ENCODE measurements at regions of chr2 and their contacts with region 1.

Region 1: DNA sequence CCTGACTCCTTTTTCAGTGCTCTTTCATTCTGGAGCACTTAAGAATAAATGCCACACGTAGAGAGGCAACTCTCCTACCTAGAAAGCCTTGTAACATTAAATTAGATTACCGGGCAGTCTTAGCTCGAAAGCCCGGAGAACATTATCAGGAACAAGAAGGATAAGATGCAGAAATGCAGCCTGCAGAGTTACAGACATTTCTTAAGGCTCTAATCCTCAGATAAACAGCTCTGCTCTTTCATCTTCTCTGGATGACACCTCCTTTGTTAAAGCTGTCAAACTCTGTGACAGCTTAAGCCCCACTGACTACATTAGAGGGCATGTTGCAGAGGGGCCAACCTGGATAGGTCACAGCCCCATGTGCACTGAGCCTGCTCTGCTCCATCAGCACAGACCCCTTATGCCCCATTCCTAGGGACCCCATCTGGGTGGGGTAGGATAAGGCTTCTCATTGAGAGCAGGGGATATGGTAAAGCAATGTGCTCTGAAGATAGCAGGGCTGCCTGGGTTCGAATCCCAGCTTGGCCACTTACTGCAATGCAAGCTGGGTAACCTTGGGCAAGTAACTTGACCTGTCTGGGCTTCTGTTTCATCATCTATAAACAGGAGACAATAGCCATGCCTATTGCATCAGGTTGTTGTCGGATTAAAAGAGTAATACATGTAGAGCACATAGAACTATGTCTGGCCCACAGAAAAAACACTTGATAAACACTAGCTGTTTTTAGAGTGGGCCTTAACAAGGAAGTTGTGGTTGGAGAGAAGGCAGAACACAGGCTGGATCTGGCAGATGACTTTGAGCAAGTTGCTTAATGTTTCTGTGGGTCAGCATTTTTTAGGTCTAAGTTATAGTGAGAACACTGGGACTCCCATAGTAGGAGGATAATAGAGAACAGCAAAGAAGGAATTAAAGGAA is 111.4 kb downstream of the THNSL2 start:
- DNase-seq: no peak

Region 2: DNA sequence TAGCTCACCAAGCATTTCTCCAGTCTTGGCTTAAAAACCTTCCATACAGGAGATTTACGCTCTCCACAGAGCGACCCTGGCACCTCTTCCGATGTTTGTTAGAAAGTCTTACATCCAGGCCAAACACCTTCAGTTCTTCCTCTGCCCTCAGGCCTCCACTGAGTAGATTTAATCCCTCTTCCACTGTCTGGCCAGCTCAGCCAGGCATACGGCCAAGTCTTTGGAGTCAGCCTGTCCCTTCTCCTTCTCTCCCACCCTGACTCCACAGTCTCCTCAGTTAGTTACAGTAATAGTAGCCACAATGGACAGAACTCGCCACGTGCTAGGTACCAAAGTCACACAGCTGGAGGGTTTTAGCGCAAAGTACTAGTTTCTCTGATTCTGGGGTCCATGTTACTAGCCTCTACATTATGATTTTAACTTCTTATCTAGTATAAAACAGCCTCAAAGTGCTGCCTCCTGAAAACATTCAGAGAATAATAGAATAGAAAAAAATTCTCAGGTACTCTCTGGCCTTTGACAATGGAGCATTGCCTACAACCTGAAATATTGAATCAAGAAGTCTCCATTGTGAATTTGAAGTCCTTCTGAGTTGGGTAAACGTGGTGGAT is 71.9 kb before region 1 on chr2:
- intact Hi-C with region 1: no loop called
- DNase-seq: peak; percentile 34

Region 3: DNA sequence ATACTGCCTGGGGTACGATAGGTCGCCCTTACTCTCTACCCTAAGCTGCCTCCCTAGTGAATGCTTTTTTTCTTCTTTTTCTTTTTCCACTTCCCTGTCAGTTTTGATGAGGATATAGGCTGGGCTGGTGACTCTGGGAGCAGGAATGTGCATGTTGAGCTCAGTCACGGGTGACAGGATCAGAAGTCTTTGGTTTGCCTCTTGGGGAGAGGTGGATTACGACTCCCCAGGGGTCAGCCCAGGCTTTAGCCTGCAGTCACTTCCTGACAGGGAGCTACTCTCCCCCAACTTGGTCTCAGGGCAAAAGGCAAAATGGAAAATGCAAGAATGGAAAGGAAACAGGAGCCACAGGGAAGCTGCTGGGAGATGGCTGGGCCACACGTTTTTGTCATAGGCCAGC is 54.1 kb before region 1 on chr2:
- intact Hi-C with region 1: loop called in 1 of 2 experiments (anchors 2 kb)
- DNase-seq: peak; percentile 40

Region 4: GRCh38 chr2:88307817-88308216 is 26.3 kb after region 1 on chr2:
- intact Hi-C with region 1: no loop called
- DNase-seq: no peak

Region 5: DNA sequence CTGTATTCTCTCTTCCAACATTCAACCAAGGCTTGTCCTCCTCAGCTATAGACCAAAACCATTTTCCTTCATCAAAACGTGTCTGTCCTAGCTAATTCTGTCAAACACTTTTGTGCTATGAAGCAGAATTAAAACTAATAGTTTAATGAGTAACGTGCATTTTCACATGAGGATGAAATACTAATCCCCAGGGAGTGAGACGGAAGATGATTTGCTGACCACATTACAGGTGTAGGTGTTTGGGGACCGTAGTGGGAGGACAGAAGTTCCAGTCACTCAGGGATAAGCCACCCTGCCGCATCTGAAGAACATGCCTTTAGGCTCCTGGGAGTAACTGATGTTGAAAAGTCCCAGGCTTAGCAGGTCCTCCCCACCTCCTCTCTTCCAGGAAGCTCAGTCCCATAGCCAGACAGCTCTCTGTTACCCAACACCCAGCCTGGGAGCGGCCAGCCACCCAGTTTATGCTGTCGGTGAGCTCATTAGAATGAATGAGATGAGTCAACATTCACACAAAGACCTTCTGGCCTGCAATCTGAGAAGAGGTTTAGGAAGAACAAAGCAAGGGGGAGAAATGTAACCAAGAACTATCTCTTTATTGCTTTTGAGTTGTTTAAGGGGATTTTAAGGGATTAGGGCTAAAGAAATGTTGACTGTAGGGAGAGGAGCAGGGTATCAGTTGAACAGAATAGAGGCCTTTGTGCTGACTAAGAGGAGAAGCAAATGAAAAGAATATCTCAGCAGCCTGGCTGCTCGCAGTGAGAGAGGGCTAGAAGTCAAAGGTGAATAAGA is 48.4 kb after region 1 on chr2:
- intact Hi-C with region 1: no loop called
- DNase-seq: no peak

Measured in posterior vena cava (tissue), 2 donors.